Transverse colon (tissue), 4 donors: ENCODE measurements at regions of chr2 and their contacts with region 1.

Region 1: DNA sequence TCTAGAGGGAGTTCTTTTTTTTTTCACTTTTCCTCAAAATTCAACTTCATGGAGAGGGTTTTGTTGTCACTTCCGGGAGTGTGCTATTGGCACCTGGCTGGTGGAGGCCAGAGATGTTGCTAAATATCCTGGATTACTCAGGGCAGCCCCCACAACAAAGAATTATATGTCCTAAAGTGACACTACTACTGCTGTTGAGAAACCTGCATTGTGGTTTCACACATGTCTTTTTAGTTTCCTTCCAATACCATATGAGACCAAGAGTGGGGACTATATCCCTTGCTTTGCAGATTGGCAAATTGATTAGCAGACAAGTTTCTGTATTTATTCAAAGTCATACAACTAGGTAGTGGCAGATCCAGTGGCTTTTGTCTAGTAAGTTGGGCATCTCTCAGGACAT is 826.8 kb downstream of the TRIB2 start:
- DNase-seq: no peak
- H3K4me3 ChIP-seq: no peak overlapping the region
- H3K27ac ChIP-seq: no peak overlapping the region
- H3K4me1 ChIP-seq: no peaks in the 10 kb centered on the region
- H3K27me3 ChIP-seq: no peaks in the 10 kb centered on the region
- CTCF ChIP-seq: no peak
- EP300 ChIP-seq: no peak
- POLR2A ChIP-seq: no peak

Region 2: DNA sequence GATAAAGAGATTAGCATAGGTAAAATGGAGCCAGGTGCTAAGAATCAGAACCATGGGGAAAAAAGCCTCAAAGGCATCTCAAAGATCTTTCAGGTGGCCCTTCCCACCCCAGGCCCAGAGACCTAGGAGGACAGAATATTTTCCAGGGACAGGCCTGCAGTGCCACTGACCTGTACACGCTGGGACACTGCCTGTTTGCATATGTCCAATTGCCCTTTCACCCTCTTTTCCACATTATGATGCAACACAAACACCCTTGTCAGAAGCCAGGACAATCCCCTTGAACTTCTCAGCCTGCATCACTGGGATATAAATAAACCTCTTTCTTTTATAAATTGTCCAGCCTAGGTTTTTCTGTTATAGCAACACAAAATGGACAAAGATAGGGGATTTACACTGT is 407.7 kb before region 1 on chr2:
- in situ Hi-C with region 1: no loop called
- intact Hi-C with region 1: no loop called
- DNase-seq: no peak
- H3K4me3 ChIP-seq: no peak overlapping the region
- H3K27ac ChIP-seq: no peak overlapping the region
- H3K4me1 ChIP-seq: no peaks in the 10 kb centered on the region
- H3K27me3 ChIP-seq: no peaks in the 10 kb centered on the region
- CTCF ChIP-seq: no peak
- EP300 ChIP-seq: no peak
- POLR2A ChIP-seq: no peak

Region 3: DNA sequence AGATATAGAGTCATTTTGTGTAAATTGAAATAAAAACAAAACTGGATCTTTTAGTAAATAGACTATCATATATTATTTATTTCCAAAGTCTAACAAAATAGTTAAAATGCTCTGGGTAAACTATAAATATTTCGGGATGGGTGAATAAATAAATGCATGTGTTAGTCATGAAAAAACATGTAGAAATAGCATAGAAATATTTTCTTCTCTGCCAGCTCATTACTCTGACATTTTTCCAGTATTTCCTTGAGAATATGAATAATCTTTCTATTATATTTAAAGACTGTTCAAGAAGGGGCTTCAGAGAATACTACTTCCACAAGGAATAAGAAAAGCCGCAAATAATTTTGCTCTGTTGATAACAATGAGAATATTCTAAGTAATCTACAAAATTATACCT is 53.6 kb after region 1 on chr2:
- in situ Hi-C with region 1: no loop called
- intact Hi-C with region 1: loop called (anchors 2 kb)
- DNase-seq: no peak
- H3K4me3 ChIP-seq: no peak overlapping the region
- H3K27ac ChIP-seq: no peak overlapping the region
- H3K4me1 ChIP-seq: no peaks in the 10 kb centered on the region
- H3K27me3 ChIP-seq: no peaks in the 10 kb centered on the region
- CTCF ChIP-seq: no peak
- EP300 ChIP-seq: no peak
- POLR2A ChIP-seq: no peak